Right ventricle myocardium superior (tissue), 1 donor: ENCODE measurements at regions of chr2 and their contacts with region 1.

Region 1: GRCh38 chr2:25851740-25852503 is 26.4 kb downstream of the ASXL2 start:
- DNase-seq: no peak
- ATAC-seq: peak; percentile 92

Region 2: DNA sequence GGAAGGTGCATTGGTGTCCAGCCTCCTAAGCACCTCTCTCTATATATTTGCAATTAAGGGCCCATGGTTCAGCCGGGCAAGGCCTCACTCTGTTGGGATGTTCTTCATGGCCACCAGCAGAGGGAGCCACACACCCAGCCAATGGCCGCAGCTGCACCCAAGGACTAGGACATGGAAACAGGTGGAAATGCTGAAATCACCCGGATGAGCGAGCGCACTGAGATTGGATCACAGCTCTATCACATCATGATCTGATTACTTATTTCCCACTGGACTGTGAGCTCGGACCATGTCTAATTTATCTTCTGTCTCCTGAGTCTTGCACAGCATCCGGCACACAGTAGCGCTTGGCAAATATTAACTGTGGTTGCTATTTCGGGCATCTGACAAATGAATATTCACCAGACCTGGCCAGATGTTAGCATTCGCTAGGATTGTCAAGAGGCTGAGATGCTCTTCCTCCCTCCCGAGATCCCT is 99.2 kb after region 1 on chr2:
- intact Hi-C with region 1: loop called (anchors 10 kb)
- DNase-seq: peak; percentile 72
- ATAC-seq: peak; percentile 97

Region 3: DNA sequence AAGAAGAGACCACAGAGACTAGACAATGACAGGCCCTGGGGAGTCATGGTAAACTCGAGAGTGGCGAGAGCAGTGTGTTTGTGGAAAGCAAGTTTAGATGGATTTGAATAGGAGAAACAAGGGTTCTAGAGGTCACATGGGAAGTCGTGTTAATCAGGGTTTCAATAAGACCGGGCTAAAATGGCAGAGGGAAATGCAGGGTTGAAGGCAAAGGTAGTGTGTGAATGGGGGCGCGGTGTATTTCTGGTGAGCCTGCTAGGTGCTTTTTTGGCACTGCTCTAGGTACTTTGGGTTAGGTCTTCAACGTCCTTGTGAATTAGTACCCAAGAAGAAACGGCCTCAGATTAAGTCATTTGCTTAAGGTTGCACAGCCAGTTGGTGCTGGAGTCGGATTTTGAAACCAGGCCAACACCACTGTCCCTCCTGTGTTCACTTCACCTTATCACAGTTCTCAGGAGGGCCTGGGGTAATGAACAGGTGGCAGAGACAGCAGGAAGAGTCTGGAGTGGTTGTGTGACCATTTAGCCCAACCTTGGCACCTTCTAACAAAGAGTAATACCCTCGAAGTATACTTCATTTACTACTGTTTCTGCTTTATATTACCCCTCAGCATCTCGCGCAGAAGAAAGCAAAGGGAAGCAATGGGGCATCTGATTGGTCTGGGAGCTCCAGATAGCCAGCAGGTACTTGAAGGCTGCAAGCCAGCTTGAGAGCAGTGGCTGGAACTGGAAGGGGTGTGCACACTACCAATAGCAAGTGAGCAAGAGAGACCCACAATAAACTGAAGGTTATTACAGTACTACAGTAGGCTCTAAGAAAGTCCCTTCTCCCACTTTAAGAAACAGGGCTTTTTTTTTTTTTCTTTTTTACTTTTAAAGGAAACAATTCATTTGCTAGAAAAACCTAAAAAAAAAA is 287.6 kb after region 1 on chr2:
- intact Hi-C with region 1: no loop called
- DNase-seq: no peak
- ATAC-seq: no peak